ENCODE measurements at regions of chr21 and their contacts with region 1.

Region 1: GRCh38 chr21:46143001-46143427 is 12.4 kb downstream of the FTCD start:
- DNase-seq: no peak
- ATAC-seq: no peak
- H3K4me3 ChIP-seq: no peak overlapping the region
- H3K4me3 Mint-ChIP-seq: no peak overlapping the region
- H3K27ac ChIP-seq: no peak overlapping the region
- H3K27ac Mint-ChIP-seq: no peak overlapping the region
- H3K4me1 ChIP-seq: peaks cover 0 to 4% of the 10 kb centered on the region in 2 experiments
- H3K4me1 Mint-ChIP-seq: peaks cover 7 to 12% (median 8%) of the 10 kb centered on the region in 3 donors
- H3K27me3 ChIP-seq: peaks cover 0 to 25% of the 10 kb centered on the region in 2 experiments
- H3K27me3 Mint-ChIP-seq: peaks cover 0 to 4% of the 10 kb centered on the region in 2 donors

Region 2: GRCh38 chr21:45973659-45974072 is 169.3 kb before region 1 on chr21:
- CTCF ChIA-PET with region 1: interaction called, 3 to 10 read pairs
- POLR2A ChIA-PET with region 1: no interaction called
- DNase-seq: peak; percentile 53 to 87 (median 77)
- ATAC-seq: peak; percentile 85 to 94 (median 88)
- H3K4me3 ChIP-seq: peak overlapping the region; percentile 74 to 88
- H3K4me3 Mint-ChIP-seq: peak overlapping the region; percentile 80 to 91 (median 84)
- H3K27ac ChIP-seq: no peak overlapping the region
- H3K27ac Mint-ChIP-seq: peak overlapping the region; percentile 28 to 55
- H3K4me1 ChIP-seq: peaks cover 7 to 53% of the 10 kb centered on the region in 2 experiments
- H3K4me1 Mint-ChIP-seq: peaks cover 11 to 20% (median 16%) of the 10 kb centered on the region in 3 donors
- H3K27me3 ChIP-seq: peaks cover 0 to 73% of the 10 kb centered on the region in 2 experiments
- H3K27me3 Mint-ChIP-seq: peaks cover 12 to 16% of the 10 kb centered on the region in 2 donors

Region 3: GRCh38 chr21:46285761-46286496 is 142.9 kb after region 1 on chr21 and contains the start of gene YBEY:
- CTCF ChIA-PET with region 1: interaction called in 1 of 2 experiments, 10 read pairs
- POLR2A ChIA-PET with region 1: no interaction called
- DNase-seq: peak; percentile 64 to 90 (median 77)
- ATAC-seq: peak; percentile 90
- H3K4me3 ChIP-seq: peak within 1 kb of the TSS; percentile 75 to 78
- H3K4me3 Mint-ChIP-seq: peak within 1 kb of the TSS; percentile 86 to 98 (median 93)
- H3K27ac ChIP-seq: peak within 1 kb of the TSS; percentile 71
- H3K27ac Mint-ChIP-seq: peak within 1 kb of the TSS; percentile 97 to 98
- H3K4me1 ChIP-seq: peaks cover 21 to 48% of the 10 kb centered on the region in 2 experiments
- H3K4me1 Mint-ChIP-seq: peaks cover 53 to 59% (median 54%) of the 10 kb centered on the region in 3 donors
- H3K27me3 ChIP-seq: no peaks in the 10 kb centered on the region
- H3K27me3 Mint-ChIP-seq: no peaks in the 10 kb centered on the region
- total RNA-seq, gene YBEY: 10.0 to 21.2 (median 19.3) TPM